HepG2 (cell line): ENCODE measurements at regions of chr3 and their contacts with region 1.

Region 1: DNA sequence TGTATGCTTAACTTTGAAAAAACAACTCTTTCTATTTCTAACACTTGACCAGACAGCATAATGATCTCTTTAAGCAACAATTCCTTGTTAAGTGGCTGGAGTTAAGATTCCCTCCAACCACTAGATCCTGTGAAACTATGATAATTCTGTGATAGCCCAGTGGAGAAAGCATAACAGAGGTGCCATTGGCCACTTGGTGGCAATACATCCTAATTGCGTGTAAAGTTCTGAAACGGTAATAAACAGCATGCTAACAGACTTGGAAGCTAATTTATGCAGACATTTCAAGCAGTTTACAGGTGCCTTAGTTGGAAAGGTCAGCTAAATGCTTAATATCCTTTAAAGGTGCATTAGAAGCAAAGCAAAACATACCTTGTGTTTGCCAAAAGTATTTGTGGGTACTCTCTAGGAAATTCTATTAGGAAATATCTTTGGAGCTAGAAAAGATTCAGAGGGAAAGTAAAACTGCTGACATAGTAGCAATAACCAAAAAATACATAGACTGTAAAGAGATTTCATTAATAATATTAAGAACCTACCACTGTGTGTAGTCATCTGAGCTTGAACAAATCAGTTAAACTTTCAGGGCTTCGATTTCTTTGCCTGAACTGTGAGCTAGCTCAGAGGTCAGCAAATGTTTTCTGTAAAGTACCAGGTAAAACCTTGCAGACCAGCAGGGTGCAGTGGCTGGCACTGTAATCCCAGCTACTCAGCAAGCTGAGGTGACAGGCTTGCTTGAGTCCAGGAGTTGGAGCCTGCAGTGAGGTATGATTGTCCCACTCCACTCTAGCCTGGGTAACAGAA is 19.0 kb upstream of the CSTA start:
- DNase-seq: peak; percentile 67
- ATAC-seq: peak; percentile 100
- H3K4me3 ChIP-seq: peak overlapping the region; percentile 28 to 49 (median 46); a peak in 5 of 6 replicates
- H3K27ac ChIP-seq: peak overlapping the region; percentile 8
- H3K4me1 ChIP-seq: peaks cover 31% of the 10 kb centered on the region
- H3K27me3 ChIP-seq: no peaks in the 10 kb centered on the region
- CTCF ChIP-seq: peak; percentile 80
- EP300 ChIP-seq: no peak
- POLR2A ChIP-seq: no peak
- RAD21 ChIP-seq: peak; percentile 45; the same call in 1 of the 2 replicates

Region 2: DNA sequence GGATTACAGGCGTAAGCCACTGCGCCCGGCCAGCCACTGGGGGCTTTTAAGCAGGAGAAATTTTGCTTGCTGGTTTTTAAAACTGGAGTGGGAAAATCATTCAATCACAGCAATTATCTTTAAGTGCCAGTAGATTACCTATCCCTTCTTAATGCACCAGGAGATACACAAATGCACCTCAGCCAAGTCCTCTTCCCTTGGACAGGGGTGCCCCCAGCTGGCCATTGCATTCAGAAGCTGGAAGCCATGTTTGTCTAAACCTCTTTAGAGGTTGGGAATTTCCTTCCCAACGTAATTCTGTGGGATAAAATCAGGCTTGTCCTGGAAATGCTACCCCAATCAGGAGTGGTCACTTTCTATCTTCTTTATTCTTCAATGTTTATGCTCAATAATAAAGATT is 50.4 kb after region 1 on chr3:
- CTCF ChIA-PET with region 1: interaction called, 3 read pairs
- POLR2A ChIA-PET with region 1: no interaction called
- in situ Hi-C with region 1: loop called (anchors 5 kb)
- intact Hi-C with region 1: loop called (anchors 1 kb)
- DNase-seq: peak; percentile 57
- ATAC-seq: peak; percentile 85
- H3K4me3 ChIP-seq: no peak overlapping the region
- H3K27ac ChIP-seq: no peak overlapping the region
- H3K4me1 ChIP-seq: no peaks in the 10 kb centered on the region
- H3K27me3 ChIP-seq: no peaks in the 10 kb centered on the region
- CTCF ChIP-seq: peak; percentile 78
- EP300 ChIP-seq: no peak
- POLR2A ChIP-seq: no peak
- RAD21 ChIP-seq: peak; percentile 74

Region 3: DNA sequence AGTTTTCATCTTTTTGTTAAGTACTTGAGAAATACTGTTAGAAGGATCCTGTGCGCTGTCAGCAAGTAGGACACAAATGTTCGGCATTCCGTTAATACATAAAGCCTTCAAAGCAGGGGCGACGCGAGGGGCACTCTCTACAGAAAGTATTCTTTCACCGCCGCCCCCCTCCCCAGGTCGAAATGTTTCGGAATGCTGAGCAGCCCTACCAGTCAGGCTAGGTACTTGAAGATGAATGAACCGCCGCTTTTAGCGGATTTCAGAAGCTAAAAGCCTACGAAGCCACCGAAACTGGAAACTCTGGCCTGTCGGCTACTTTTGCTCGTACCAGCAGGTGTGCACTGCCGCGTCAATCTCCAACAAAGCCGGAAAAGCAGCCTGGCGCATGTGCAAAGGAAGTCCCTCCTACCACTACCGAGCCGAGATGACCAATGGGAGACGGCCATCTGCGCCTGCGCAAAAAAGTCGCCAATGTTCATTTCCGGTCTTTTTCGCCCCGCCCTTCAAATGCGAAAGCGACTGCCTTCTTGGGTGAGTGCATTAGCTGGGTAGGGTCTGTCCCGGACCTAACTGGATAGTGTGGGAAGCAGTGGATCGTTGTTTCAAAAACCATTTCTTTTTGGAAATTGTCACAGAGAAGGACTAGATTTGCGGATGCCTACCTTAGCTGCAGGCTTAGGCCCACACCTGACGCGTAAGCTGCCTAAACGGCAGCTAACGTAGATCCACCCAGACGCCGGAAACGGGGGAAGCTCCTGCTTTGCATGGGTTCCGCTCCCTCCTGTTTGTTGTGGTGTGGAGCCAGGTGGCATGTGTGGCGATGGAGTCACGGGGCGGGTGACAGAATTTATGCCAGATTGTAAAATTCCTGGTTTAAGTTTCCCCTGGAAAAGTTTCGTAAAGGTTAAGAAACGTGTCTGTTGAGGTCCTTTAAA is 110.0 kb after region 1 on chr3 and contains the start of gene WDR5B:
- CTCF ChIA-PET with region 1: no interaction called
- POLR2A ChIA-PET with region 1: interaction called, 16 read pairs
- in situ Hi-C with region 1: no loop called
- intact Hi-C with region 1: no loop called
- DNase-seq: peak; percentile 96
- ATAC-seq: peak; percentile 95
- H3K4me3 ChIP-seq: peak within 1 kb of the TSS; percentile 61 to 81 (median 81)
- H3K27ac ChIP-seq: peak within 1 kb of the TSS; percentile 89
- H3K4me1 ChIP-seq: peaks cover 33% of the 10 kb centered on the region
- H3K27me3 ChIP-seq: no peaks in the 10 kb centered on the region; a peak in 1 of 5 replicates
- CTCF ChIP-seq: no peak
- EP300 ChIP-seq: no peak
- POLR2A ChIP-seq: peak; percentile 90 to 97
- RAD21 ChIP-seq: peak; percentile 35; the same call in 1 of the 2 replicates
- total RNA-seq, gene WDR5B: 3.6 and 4.5 TPM in 2 replicates

Region 4: DNA sequence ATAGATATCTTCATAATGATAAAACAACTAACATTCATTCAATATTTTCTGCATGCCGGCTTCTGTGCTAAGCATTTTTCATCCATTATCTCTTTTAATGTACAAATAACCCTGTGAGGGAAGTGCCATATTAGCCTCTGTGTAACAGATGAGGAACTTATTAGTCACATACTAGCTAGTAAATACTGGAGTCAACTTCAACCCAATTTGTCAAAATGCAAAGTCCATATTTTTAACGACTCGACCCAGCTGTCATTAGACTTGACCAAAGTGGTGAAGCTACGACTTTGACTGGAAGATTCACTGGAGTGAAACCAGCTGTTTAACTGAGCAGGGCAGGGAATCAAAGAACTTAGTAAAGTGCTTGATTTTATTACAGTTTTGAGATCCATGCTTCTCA is 313.0 kb after region 1 on chr3:
- CTCF ChIA-PET with region 1: no interaction called
- POLR2A ChIA-PET with region 1: no interaction called
- in situ Hi-C with region 1: no loop called
- intact Hi-C with region 1: no loop called
- DNase-seq: no peak
- ATAC-seq: no peak
- H3K4me3 ChIP-seq: no peak overlapping the region
- H3K27ac ChIP-seq: no peak overlapping the region
- H3K4me1 ChIP-seq: no peaks in the 10 kb centered on the region
- H3K27me3 ChIP-seq: peaks cover 2 to 56% of the 10 kb centered on the region in 2 experiments
- CTCF ChIP-seq: no peak
- EP300 ChIP-seq: no peak
- POLR2A ChIP-seq: no peak
- RAD21 ChIP-seq: no peak